Kidney (tissue), 22 donors: ENCODE measurements at regions of chr12 and their contacts with region 1.

Region 1: DNA sequence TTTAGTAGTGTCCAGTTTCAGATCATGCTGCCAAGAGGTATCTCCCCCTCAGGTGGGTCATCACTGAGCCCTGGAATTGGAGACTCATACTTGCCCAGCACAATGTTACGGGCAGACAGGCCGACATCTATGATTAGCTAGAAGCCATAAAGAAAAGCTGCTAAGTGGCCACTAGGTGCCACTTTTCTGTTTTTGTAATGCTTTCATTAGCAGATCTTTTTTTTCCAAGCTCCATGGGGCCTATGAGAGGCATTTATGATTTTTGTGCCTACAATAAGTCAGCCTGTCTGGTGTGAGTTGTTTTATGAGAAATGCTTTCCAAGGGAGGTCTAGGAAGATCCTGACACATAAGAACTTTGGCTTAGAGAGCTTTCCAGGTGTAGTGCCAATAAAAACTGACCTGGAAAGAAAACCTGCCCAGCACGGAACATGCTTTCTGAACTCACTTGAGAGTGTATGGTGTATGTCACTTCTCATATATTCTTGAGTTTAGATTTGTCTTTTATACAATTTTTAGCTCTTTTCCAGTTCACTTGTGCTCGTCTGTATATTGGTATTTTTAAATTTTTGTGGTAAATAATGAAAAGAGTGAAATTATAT is 21.8 kb upstream of the SMCO2 start:
- DNase-seq: peak in 3 of 5 donors; percentile 12 to 77 (median 48)
- H3K4me3 ChIP-seq: no peak overlapping the region
- H3K27ac ChIP-seq: no peak overlapping the region
- H3K4me1 ChIP-seq: no peaks in the 10 kb centered on the region
- H3K27me3 ChIP-seq: no peaks in the 10 kb centered on the region
- CTCF ChIP-seq: peak; percentile 57

Region 2: DNA sequence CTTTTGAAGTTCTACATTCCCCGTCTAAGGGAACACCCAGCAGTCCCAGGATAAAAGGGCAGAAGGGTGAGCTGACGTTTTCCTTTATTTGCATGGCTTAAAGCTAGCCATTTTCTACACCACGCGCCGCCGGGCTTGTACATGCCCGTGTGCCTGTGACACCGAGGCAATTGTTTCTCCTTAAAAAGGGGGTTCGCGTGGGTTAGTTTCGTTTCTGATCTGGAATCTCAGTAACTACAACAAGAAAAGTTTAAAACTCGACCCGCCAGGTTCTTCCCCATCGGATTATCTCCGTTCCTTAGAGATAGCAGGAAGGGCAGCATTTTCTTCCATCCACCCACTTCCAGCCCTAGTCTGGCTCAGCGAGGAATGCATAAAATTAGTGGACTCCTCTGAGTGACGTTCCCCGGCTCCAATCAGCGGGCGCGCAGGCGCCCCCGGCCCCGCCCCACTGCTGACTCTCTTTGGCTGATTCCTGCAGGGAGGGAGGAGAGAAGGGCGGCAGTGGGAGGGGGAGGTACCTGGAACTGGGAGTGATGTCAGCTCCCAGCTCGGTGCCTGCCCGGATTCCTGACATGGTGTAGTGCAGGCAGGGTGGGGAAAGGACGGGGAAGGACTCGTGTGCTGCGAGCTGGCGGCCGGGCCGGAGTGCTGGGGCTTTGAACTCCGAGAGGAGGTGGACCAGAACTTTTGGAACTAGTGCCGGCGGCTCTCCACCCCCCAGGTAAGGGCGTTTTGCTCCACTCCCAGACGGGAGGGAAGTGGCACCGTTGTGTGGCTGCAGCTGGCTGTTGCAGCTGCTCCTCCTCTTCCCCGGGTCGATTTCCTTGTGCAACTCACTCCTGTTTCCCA is 99.1 kb after region 1 on chr12 and contains the start of gene PPFIBP1:
- intact Hi-C with region 1: no loop called
- DNase-seq: peak; percentile 99 to 100 (median 100)
- H3K4me3 ChIP-seq: peak within 1 kb of the TSS; percentile 84 to 96 (median 95)
- H3K27ac ChIP-seq: peak within 1 kb of the TSS; percentile 96 to 98
- H3K4me1 ChIP-seq: peaks cover 5 to 13% (median 8%) of the 10 kb centered on the region in 3 donors
- H3K27me3 ChIP-seq: no peaks in the 10 kb centered on the region
- CTCF ChIP-seq: peak; percentile 4
- total RNA-seq, gene PPFIBP1: 175 TPM

Region 3: DNA sequence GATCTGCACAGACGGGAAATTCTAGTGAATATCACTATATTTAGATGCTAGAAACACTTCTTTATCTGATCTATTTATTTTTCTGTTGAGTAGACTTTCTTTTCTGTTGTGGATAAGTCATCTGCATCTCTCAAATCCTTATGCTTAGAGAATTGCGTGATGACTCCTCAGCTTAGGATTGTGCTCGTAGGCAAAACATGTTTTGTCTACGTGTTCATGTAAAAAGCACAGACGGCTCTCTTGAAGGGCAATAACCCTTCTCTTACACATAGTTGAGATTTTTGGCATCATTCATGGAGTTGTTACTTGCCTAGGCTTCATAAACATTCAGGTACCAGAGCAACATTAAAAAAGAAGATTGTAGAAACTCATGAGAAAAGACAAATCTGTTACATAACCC is 117.9 kb after region 1 on chr12:
- intact Hi-C with region 1: no loop called
- DNase-seq: no peak
- H3K4me3 ChIP-seq: no peak overlapping the region
- H3K27ac ChIP-seq: no peak overlapping the region
- H3K4me1 ChIP-seq: peaks cover 2 to 9% (median 6%) of the 10 kb centered on the region in 3 donors
- H3K27me3 ChIP-seq: no peaks in the 10 kb centered on the region
- CTCF ChIP-seq: no peak

Region 4: GRCh38 chr12:27619308-27619707 is 194.6 kb after region 1 on chr12:
- intact Hi-C with region 1: no loop called
- DNase-seq: no peak
- H3K4me3 ChIP-seq: no peak overlapping the region
- H3K27ac ChIP-seq: peak overlapping the region in 1 of 2 donors; percentile 26
- H3K4me1 ChIP-seq: peaks cover 0 to 11% (median 10%) of the 10 kb centered on the region in 3 donors
- H3K27me3 ChIP-seq: no peaks in the 10 kb centered on the region
- CTCF ChIP-seq: no peak

Region 5: DNA sequence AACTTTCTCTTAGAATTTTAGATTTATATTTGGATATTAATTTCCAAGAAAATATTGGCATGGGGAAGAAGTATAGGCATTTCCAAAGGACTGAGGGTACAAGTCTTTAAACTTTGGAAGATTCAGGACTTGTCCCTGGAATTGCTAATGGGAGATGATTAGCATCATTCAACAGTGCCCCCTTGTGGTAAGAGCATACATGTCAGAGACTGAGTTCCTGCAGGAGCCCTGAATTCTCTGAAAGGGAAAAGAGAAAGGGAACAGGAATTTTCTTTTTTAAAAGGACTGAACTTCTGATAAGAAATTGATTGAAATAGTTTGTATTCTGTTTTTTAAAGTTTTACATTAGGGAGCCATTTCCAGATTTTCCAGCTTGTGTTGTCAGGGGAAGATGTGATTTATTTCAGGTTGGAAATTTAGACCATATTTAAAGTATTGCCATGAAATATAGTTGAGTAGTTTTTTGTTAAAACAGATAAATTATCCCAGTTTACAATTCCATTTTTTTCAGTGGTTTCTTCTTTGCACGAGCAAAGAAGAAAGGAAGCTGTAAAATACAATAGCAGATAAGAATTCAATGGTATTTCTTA is 227.5 kb after region 1 on chr12:
- intact Hi-C with region 1: loop called (anchors 10 kb)
- DNase-seq: peak in 4 of 5 donors; percentile 47 to 94 (median 76)
- H3K4me3 ChIP-seq: no peak overlapping the region
- H3K27ac ChIP-seq: no peak overlapping the region
- H3K4me1 ChIP-seq: no peaks in the 10 kb centered on the region
- H3K27me3 ChIP-seq: no peaks in the 10 kb centered on the region
- CTCF ChIP-seq: peak; percentile 92

Region 6: DNA sequence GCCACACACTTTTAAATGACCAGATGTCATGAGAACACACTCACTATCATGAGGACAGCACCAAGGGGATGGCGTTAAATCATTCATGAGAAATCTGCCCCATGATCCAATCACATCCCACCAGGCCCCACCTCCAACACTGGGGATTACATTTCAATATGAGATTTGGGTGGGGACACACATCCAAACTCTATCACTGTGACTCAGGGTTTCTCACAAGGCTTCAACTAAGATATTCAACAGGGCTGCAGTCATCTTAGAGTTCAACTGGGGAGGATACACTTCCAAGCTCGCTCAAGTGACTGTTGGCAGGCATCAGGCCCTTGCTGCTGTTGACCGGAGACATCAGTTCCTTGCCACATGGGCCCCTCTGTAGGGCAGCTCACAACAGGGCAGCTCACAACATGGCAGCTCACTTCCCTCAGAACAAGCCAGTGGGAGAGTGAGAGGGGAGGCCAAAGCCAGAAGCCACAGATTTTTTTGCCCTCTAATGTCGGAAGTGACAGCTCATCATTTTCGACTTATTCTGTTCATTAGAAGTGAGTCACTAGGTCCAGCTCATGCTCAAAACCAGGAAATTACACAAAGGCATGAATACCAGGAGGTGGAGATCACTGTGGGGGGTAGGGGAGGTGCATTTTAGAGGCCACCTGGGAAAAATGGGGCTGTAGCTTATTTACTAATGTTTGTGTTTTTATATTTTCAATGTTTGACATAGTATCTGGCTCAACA is 598.6 kb after region 1 on chr12:
- intact Hi-C with region 1: no loop called
- DNase-seq: no peak
- H3K4me3 ChIP-seq: no peak overlapping the region
- H3K27ac ChIP-seq: no peak overlapping the region
- H3K4me1 ChIP-seq: no peaks in the 10 kb centered on the region
- H3K27me3 ChIP-seq: no peaks in the 10 kb centered on the region
- CTCF ChIP-seq: no peak